Adrenal gland (tissue), 19 donors: ENCODE measurements at regions of chr17 and their contacts with region 1.

Region 1: GRCh38 chr17:21126645-21127510 is at the start of gene DHRS7B:
- DNase-seq: peak; percentile 94 to 98 (median 96)
- H3K4me3 ChIP-seq: peak within 1 kb of the TSS; percentile 0 to 97 (median 46)
- H3K27ac ChIP-seq: peak within 1 kb of the TSS; percentile 73 to 91 (median 87)
- H3K4me1 ChIP-seq: peaks cover 6 to 17% of the 10 kb centered on the region in 2 donors
- H3K27me3 ChIP-seq: no peaks in the 10 kb centered on the region
- CTCF ChIP-seq: no peak
- POLR2A ChIP-seq: peak in 1 of 2 donors; percentile 57
- total RNA-seq, gene DHRS7B: 18.0 to 68.5 (median 35.6) TPM

Region 2: GRCh38 chr17:20935740-20936139 is 191.1 kb before region 1 on chr17:
- intact Hi-C with region 1: no loop called
- DNase-seq: no peak
- H3K4me3 ChIP-seq: no peak overlapping the region
- H3K27ac ChIP-seq: peak overlapping the region in 4 of 5 donors; percentile 22 to 55 (median 52)
- H3K4me1 ChIP-seq: peaks cover 14 to 26% of the 10 kb centered on the region in 2 donors
- H3K27me3 ChIP-seq: no peaks in the 10 kb centered on the region
- CTCF ChIP-seq: no peak
- POLR2A ChIP-seq: no peak

Region 3: GRCh38 chr17:21239680-21240368 is 112.9 kb after region 1 on chr17:
- intact Hi-C with region 1: loop called (anchors 10 kb)
- DNase-seq: peak in 1 of 7 donors; percentile 24
- H3K4me3 ChIP-seq: no peak overlapping the region
- H3K27ac ChIP-seq: no peak overlapping the region
- H3K4me1 ChIP-seq: no peaks in the 10 kb centered on the region
- H3K27me3 ChIP-seq: no peaks in the 10 kb centered on the region
- CTCF ChIP-seq: peak; percentile 31 to 49 (median 43)
- POLR2A ChIP-seq: no peak